ENCODE measurements at regions of chr11 and their contacts with region 1.

Region 1: GRCh38 chr11:10808553-10809372 is at the start of gene EIF4G2:
- DNase-seq: peak; percentile 97
- ATAC-seq: peak; percentile 95
- H3K4me3 Mint-ChIP-seq: peak within 1 kb of the TSS; percentile 90
- H3K27ac Mint-ChIP-seq: peak within 1 kb of the TSS; percentile 98
- H3K4me1 Mint-ChIP-seq: peaks cover 28% of the 10 kb centered on the region
- H3K27me3 Mint-ChIP-seq: no peaks in the 10 kb centered on the region
- CTCF ChIP-seq: no peak
- total RNA-seq, gene EIF4G2: 779 to 918 TPM (median 906 TPM) in 3 replicates

Region 2: DNA sequence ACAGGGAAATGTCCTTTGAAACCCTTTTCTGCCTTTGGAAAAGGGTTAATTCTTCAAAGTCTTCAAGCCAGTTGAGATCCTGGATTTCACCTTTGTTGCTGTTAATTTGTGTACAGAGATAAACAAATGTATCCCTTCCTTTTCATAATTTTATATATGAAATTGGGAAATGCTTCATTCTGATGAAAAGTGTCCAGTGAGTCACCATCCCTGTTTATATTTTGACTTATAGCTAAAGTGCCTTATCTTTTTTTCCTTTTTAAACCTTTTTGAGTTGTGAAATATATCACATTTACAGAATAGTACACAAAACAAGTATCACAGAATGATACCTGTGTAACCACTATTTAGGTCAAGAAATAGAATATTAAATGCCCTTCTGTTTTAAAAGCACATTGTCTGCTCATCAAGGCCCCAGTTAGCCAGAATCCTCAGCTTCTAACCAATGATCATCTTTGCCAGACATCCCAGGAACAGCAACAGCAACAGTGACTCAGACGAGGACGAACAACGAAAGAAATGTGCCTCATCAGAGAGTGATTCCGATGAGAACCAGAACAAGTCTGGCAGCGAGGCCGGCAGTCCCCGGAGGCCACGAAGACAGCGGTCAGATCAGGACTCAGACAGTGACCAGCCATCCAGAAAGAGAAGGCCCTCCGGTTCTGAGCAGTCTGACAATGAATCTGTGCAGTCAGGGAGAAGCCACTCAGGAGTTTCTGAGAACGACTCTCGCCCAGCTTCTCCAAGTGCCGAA is 30.4 kb before region 1 on chr11:
- CTCF ChIA-PET with region 1: no interaction called
- POLR2A ChIA-PET with region 1: no interaction called
- DNase-seq: no peak
- ATAC-seq: no peak
- H3K4me3 Mint-ChIP-seq: no peak overlapping the region
- H3K27ac Mint-ChIP-seq: no peak overlapping the region
- H3K4me1 Mint-ChIP-seq: no peaks in the 10 kb centered on the region
- H3K27me3 Mint-ChIP-seq: no peaks in the 10 kb centered on the region; the same call in 1 of the 2 replicates
- CTCF ChIP-seq: no peak

Region 3: DNA sequence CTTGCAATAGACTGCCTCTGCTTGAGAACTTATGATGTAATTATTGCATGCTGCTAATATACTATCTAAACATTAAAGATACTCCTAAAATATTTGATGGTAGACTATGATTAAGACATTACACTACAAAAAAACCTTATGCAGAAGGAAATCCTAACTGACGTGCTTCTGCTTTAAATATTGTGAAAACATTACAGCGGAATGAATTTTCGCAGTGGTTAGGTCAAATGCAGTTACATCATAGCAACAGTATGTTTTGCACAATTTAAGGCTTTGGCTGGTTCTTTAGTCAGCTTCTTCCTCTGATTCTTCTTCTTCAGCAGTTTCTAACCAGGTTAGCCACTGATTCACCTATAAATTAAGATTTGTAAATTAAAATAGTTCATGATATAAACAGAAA is 11.2 kb before region 1 on chr11:
- CTCF ChIA-PET with region 1: interaction called, 29 read pairs
- POLR2A ChIA-PET with region 1: interaction called, 27 read pairs
- DNase-seq: no peak
- ATAC-seq: no peak
- H3K4me3 Mint-ChIP-seq: no peak overlapping the region
- H3K27ac Mint-ChIP-seq: no peak overlapping the region
- H3K4me1 Mint-ChIP-seq: peaks cover 4% of the 10 kb centered on the region
- H3K27me3 Mint-ChIP-seq: no peaks in the 10 kb centered on the region
- CTCF ChIP-seq: no peak

Region 4: DNA sequence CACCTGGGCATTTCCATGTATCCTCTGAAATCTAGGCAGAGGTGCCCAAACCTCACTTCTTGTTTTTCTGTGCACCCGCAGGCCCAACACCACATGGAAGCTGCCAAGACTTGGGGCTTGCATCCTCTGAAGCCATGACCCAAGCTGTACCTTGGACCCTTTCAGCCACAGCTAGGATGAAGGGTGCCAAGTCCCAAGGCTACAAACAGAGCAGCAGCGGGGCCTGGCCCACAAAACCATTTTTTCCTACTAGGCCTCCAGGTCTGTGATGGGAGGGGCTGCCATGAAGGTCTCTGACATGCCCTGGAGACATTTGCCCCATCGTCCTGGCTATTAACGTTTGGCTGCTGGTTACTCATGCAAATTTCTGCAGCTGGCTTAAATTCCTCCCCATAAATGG is 20.4 kb after region 1 on chr11:
- CTCF ChIA-PET with region 1: no interaction called
- POLR2A ChIA-PET with region 1: interaction called, 10 read pairs
- DNase-seq: no peak
- ATAC-seq: no peak
- H3K4me3 Mint-ChIP-seq: no peak overlapping the region
- H3K27ac Mint-ChIP-seq: no peak overlapping the region
- H3K4me1 Mint-ChIP-seq: no peaks in the 10 kb centered on the region; the same call in 1 of the 2 replicates
- H3K27me3 Mint-ChIP-seq: peaks cover 3% of the 10 kb centered on the region; the same call in 1 of the 2 replicates
- CTCF ChIP-seq: no peak

Region 5: DNA sequence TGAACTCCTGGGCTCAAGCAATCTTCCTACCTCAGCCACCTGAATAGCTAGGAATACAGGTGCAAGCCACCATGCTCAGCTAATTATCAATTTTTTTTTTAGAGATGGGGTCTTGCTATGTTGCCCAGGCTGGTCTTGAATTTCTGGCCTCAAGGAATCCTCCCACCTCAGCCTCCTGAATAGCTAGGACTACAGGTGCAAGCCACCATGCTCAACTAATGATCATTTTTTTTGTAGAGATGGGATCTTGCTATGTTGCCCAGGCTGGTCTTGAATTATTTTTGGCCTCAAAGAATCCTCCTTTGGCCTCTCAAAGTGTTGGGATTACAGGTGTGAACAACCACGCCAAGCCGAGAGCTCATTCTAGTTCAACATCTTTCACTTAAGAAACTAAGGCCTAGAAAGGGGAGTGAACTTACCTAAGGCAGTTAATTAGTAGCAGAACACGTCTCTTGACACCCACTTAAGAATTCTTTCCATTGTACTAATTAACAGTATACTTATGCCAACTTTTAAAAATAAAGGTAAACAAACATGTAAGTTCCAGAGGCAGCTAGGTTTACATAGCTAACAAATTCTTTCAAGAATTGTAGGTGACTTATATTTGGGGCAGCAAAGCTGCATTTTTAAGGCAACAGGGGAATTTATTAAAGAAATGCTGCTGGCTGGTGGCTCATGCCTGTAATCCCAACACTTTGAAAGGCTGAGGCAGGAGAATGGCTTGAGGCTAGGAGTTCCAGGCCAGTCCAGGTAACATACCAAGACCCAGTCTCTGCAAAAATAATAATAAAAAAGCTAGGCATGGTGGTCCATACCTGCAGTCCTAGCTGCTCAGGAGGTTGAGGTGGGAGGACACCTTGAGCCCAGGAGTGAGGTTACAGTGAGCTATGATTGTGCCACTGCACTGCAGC is 39.5 kb after region 1 on chr11:
- CTCF ChIA-PET with region 1: interaction called, 9 read pairs
- POLR2A ChIA-PET with region 1: interaction called, 19 read pairs
- DNase-seq: no peak
- ATAC-seq: no peak
- H3K4me3 Mint-ChIP-seq: no peak overlapping the region
- H3K27ac Mint-ChIP-seq: no peak overlapping the region
- H3K4me1 Mint-ChIP-seq: peaks cover 6% of the 10 kb centered on the region
- H3K27me3 Mint-ChIP-seq: no peaks in the 10 kb centered on the region
- CTCF ChIP-seq: no peak

Region 6: GRCh38 chr11:10857709-10858438 is 49.1 kb after region 1 on chr11 and contains the start of gene ZBED5:
- CTCF ChIA-PET with region 1: interaction called, 14 read pairs
- POLR2A ChIA-PET with region 1: interaction called, 130 read pairs
- DNase-seq: peak; percentile 96
- ATAC-seq: peak; percentile 96
- H3K4me3 Mint-ChIP-seq: peak within 1 kb of the TSS; percentile 100
- H3K27ac Mint-ChIP-seq: peak within 1 kb of the TSS; percentile 100
- H3K4me1 Mint-ChIP-seq: peaks cover 30% of the 10 kb centered on the region
- H3K27me3 Mint-ChIP-seq: no peaks in the 10 kb centered on the region
- CTCF ChIP-seq: no peak
- total RNA-seq, gene ZBED5: 44.9 to 49.5 TPM (median 48.7 TPM) in 3 replicates

Region 7: DNA sequence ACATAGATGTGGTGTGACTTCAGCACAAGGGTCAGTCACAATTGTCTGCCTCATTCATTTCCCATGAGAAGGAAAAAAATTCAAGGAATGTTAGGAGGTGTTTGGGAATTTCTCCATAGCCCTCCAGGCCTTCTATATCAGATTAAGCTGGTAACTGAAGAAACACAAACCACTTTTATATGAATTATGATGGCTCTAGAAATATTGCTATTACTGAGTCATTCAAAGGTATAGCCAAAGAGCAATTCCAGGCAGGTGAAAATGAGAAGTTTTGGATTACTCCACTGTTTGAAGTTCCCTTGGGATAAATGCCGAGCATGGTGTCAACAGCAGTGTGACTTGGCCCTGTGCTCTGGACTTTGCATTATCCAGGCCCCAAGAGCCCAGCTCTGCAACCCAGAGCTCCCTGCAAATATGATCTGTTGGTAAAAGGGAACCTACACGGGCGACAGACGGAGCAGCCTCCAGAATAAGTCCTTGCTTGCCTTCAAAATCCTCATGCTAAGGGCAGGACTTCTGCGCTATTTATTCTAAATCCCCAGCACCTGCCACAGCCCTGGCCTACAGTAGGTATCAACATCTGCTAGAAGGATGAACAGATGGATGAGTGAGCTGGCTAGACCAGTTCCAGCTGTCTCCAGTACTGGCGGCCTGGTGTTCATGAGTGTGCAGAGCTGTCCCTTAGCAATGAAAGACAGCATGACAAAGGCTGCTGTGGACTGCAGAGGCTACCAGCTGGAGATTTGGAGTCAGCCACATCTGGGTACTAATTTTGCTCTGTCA is 116.6 kb after region 1 on chr11:
- CTCF ChIA-PET with region 1: interaction called, 5 read pairs
- POLR2A ChIA-PET with region 1: interaction called, 46 read pairs
- DNase-seq: no peak
- ATAC-seq: peak; percentile 55
- H3K4me3 Mint-ChIP-seq: no peak overlapping the region
- H3K27ac Mint-ChIP-seq: no peak overlapping the region
- H3K4me1 Mint-ChIP-seq: peaks cover 14% of the 10 kb centered on the region
- H3K27me3 Mint-ChIP-seq: peaks cover 20% of the 10 kb centered on the region
- CTCF ChIP-seq: no peak